ENCODE measurements at regions of chr11 and their contacts with region 1.

Region 1: GRCh38 chr11:16820324-16821092 is 82.1 kb downstream of the C11orf58 start:
- DNase-seq: peak; percentile 74
- H3K4me3 ChIP-seq: peak overlapping the region in 1 of 2 experiments; percentile 41; a peak in 1 of 4 replicates
- H3K27ac ChIP-seq: no peak overlapping the region
- H3K4me1 ChIP-seq: peaks cover 0 to 6% of the 10 kb centered on the region in 2 experiments; a peak in 2 of 4 replicates
- H3K27me3 ChIP-seq: no peaks in the 10 kb centered on the region
- CTCF ChIP-seq: peak; percentile 93
- EP300 ChIP-seq: no peak
- RAD21 ChIP-seq: peak; percentile 80

Region 2: GRCh38 chr11:16795146-16795545 is 25.4 kb before region 1 on chr11:
- CTCF ChIA-PET with region 1: interaction called, 25 read pairs
- POLR2A ChIA-PET with region 1: no interaction called
- DNase-seq: no peak
- H3K4me3 ChIP-seq: no peak overlapping the region
- H3K27ac ChIP-seq: no peak overlapping the region
- H3K4me1 ChIP-seq: peaks cover 1 to 4% of the 10 kb centered on the region in 2 experiments
- H3K27me3 ChIP-seq: no peaks in the 10 kb centered on the region
- CTCF ChIP-seq: no peak
- EP300 ChIP-seq: no peak
- RAD21 ChIP-seq: no peak

Region 3: GRCh38 chr11:16809886-16810668 is 10.4 kb before region 1 on chr11:
- CTCF ChIA-PET with region 1: interaction called, 80 read pairs
- POLR2A ChIA-PET with region 1: no interaction called
- DNase-seq: no peak
- H3K4me3 ChIP-seq: no peak overlapping the region
- H3K27ac ChIP-seq: no peak overlapping the region
- H3K4me1 ChIP-seq: peaks cover 8 to 9% of the 10 kb centered on the region in 2 experiments; a peak in 1 of 4 replicates
- H3K27me3 ChIP-seq: no peaks in the 10 kb centered on the region
- CTCF ChIP-seq: no peak
- EP300 ChIP-seq: no peak
- RAD21 ChIP-seq: no peak

Region 4: GRCh38 chr11:16846305-16846704 is 25.8 kb after region 1 on chr11:
- CTCF ChIA-PET with region 1: interaction called, 15 read pairs
- POLR2A ChIA-PET with region 1: interaction called, 3 read pairs
- DNase-seq: no peak
- H3K4me3 ChIP-seq: no peak overlapping the region
- H3K27ac ChIP-seq: no peak overlapping the region
- H3K4me1 ChIP-seq: no peaks in the 10 kb centered on the region
- H3K27me3 ChIP-seq: no peaks in the 10 kb centered on the region; the same call in 1 of the 2 replicates
- CTCF ChIP-seq: no peak
- EP300 ChIP-seq: no peak
- RAD21 ChIP-seq: no peak

Region 5: GRCh38 chr11:16912692-16913111 is 92.2 kb after region 1 on chr11:
- CTCF ChIA-PET with region 1: interaction called, 14 read pairs
- POLR2A ChIA-PET with region 1: no interaction called
- DNase-seq: no peak
- H3K4me3 ChIP-seq: no peak overlapping the region
- H3K27ac ChIP-seq: no peak overlapping the region
- H3K4me1 ChIP-seq: 0 out of 4 replicates have a peak, but pooled peaks cover 0 to 2% of the 10 kb centered on the region in 2 experiments
- H3K27me3 ChIP-seq: peaks cover 5% of the 10 kb centered on the region
- CTCF ChIP-seq: no peak
- EP300 ChIP-seq: no peak
- RAD21 ChIP-seq: no peak

Region 6: GRCh38 chr11:16935518-16936302 is 115.2 kb after region 1 on chr11:
- CTCF ChIA-PET with region 1: interaction called, 17 read pairs
- POLR2A ChIA-PET with region 1: no interaction called
- DNase-seq: peak; percentile 50
- H3K4me3 ChIP-seq: no peak overlapping the region
- H3K27ac ChIP-seq: no peak overlapping the region
- H3K4me1 ChIP-seq: peaks cover 0 to 3% of the 10 kb centered on the region in 2 experiments; a peak in 1 of 4 replicates
- H3K27me3 ChIP-seq: peaks cover 10% of the 10 kb centered on the region; the same call in 1 of the 2 replicates
- CTCF ChIP-seq: peak; percentile 76
- EP300 ChIP-seq: no peak
- RAD21 ChIP-seq: peak; percentile 68

Region 7: DNA sequence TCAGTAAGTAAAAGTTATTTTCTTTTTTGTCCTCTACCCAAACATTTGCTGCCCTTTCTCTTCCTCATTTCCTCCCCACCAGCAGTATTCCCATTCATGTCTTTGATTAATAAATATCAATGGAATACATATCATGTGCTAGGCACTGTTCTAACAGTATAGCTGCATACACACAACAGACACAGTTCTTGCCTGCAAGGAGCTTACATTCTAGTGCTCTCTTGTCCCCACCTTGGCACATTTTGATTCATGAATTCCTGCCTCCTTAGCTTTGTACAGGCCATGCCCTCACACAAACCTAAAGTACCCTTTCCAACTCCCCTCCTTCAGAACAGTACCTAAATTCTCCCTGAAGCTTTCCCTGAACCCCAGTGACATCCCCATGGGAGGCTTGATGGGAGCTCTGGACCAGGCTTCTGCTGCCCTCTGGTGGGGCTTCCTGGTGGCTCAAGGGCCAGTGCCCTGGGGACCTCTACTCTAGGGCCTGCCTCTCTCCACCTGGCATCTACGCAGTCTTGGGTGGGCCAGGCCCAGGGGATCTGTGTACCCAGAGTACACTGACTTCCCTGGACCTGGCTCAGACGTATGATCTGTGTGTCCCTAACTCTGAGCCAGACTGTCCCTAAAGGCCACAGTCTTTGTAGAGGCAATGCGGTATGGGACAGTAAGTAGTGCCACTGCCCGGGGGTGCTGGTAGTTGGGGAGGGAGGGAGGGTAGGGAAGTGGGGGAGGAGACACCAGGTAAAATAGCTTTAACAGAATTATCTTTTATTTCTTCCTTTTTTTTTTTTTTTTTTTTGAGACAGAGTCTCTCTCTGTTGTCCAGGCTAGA is 242.9 kb after region 1 on chr11:
- CTCF ChIA-PET with region 1: interaction called, 19 read pairs
- POLR2A ChIA-PET with region 1: no interaction called
- DNase-seq: peak; percentile 79
- H3K4me3 ChIP-seq: no peak overlapping the region; a peak in 1 of 4 replicates
- H3K27ac ChIP-seq: no peak overlapping the region
- H3K4me1 ChIP-seq: no peaks in the 10 kb centered on the region
- H3K27me3 ChIP-seq: no peaks in the 10 kb centered on the region
- CTCF ChIP-seq: peak; percentile 75
- EP300 ChIP-seq: no peak
- RAD21 ChIP-seq: peak; percentile 89